Activated CD4-positive, alpha-beta memory T cell treated with anti-CD3 and anti-CD28 coated beads for 36 hours (primary cell): ENCODE measurements at regions of chr16 and their contacts with region 1.

Region 1: GRCh38 chr16:57300387-57301125 is 16.1 kb upstream of the PLLP start:
- DNase-seq: peak; percentile 100
- H3K4me3 Mint-ChIP-seq: no peak overlapping the region
- H3K27ac Mint-ChIP-seq: no peak overlapping the region
- H3K4me1 Mint-ChIP-seq: peaks cover 10% of the 10 kb centered on the region
- H3K27me3 Mint-ChIP-seq: no peaks in the 10 kb centered on the region

Region 2: GRCh38 chr16:57244767-57245471 is 55.6 kb before region 1 on chr16 and contains the start of gene ARL2BP:
- CTCF ChIA-PET with region 1: interaction called, 4 read pairs
- POLR2A ChIA-PET with region 1: no interaction called
- intact Hi-C with region 1: loop called (anchors 1 kb)
- DNase-seq: peak; percentile 99
- H3K4me3 Mint-ChIP-seq: peak within 1 kb of the TSS; percentile 89
- H3K27ac Mint-ChIP-seq: peak within 1 kb of the TSS; percentile 88
- H3K4me1 Mint-ChIP-seq: peaks cover 16% of the 10 kb centered on the region
- H3K27me3 Mint-ChIP-seq: no peaks in the 10 kb centered on the region
- total RNA-seq, gene ARL2BP: 16.4 to 16.9 TPM

Region 3: GRCh38 chr16:57260294-57260929 is 40.1 kb before region 1 on chr16:
- CTCF ChIA-PET with region 1: no interaction called
- POLR2A ChIA-PET with region 1: no interaction called
- intact Hi-C with region 1: no loop called
- DNase-seq: peak; percentile 29
- H3K4me3 Mint-ChIP-seq: no peak overlapping the region
- H3K27ac Mint-ChIP-seq: no peak overlapping the region
- H3K4me1 Mint-ChIP-seq: peaks cover 13% of the 10 kb centered on the region
- H3K27me3 Mint-ChIP-seq: no peaks in the 10 kb centered on the region

Region 4: DNA sequence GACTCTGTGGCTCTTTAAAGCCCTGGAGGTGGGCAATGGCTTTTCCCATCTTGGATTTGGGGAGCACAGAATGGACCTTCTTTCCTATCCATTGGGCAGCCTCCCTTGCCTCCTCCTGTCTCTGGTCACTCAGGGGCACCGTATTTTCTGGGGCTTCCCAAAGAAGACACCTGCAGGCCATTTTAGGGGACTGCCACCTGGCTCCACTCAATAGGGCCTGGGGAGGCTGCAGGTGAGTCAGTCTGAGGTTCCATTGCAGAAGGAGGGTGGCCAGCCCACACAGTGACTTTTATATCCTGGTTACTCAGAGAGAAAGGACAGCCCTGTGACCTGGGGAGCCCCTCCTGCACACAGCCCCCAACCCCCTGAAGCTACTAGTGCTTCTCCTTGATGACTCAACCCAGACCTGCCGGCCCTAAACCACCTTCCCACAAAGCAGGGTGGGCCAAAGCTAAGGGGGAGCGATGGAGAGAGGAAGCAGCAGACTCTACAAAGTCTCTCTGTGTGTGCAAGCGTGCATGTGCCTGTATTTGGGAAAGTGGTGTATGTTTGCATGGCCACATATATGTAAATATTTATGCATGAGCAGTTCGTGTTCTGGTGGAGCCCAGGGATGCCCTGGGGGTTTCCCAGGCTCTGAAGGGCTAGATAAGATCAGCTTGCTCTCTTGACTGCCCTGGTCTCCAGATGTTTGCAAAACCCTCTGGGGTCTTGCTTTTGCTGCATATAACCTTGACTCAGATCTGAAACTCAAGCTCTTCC is 76.7 kb after region 1 on chr16:
- CTCF ChIA-PET with region 1: no interaction called
- POLR2A ChIA-PET with region 1: no interaction called
- intact Hi-C with region 1: loop called (anchors 1 kb)
- DNase-seq: peak; percentile 70
- H3K4me3 Mint-ChIP-seq: no peak overlapping the region
- H3K27ac Mint-ChIP-seq: peak overlapping the region; percentile 51
- H3K4me1 Mint-ChIP-seq: peaks cover 14% of the 10 kb centered on the region
- H3K27me3 Mint-ChIP-seq: peaks cover 3% of the 10 kb centered on the region

Region 5: GRCh38 chr16:57447186-57447962 is 146.8 kb after region 1 on chr16 and contains the starts of genes CIAPIN1 and COQ9:
- CTCF ChIA-PET with region 1: interaction called, 13 read pairs
- POLR2A ChIA-PET with region 1: interaction called, 6 read pairs
- intact Hi-C with region 1: loop called (anchors 1 kb)
- DNase-seq: peak; percentile 96
- H3K4me3 Mint-ChIP-seq: peak within 1 kb of the TSS; percentile 91
- H3K27ac Mint-ChIP-seq: peak within 1 kb of the TSS; percentile 70
- H3K4me1 Mint-ChIP-seq: peaks cover 28% of the 10 kb centered on the region
- H3K27me3 Mint-ChIP-seq: no peaks in the 10 kb centered on the region
- total RNA-seq, gene CIAPIN1: 34.8 to 38.5 TPM
- total RNA-seq, gene COQ9: 29.8 to 33.0 TPM

Region 6: GRCh38 chr16:57519796-57520360 is 219.3 kb after region 1 on chr16:
- CTCF ChIA-PET with region 1: interaction called, 41 read pairs
- POLR2A ChIA-PET with region 1: no interaction called
- intact Hi-C with region 1: loop called (anchors 1 kb)
- DNase-seq: peak; percentile 85
- H3K4me3 Mint-ChIP-seq: no peak overlapping the region
- H3K27ac Mint-ChIP-seq: no peak overlapping the region
- H3K4me1 Mint-ChIP-seq: peaks cover 3% of the 10 kb centered on the region
- H3K27me3 Mint-ChIP-seq: no peaks in the 10 kb centered on the region

Region 7: GRCh38 chr16:57826706-57827625 is 526.4 kb after region 1 on chr16:
- CTCF ChIA-PET with region 1: no interaction called
- POLR2A ChIA-PET with region 1: no interaction called
- intact Hi-C with region 1: no loop called
- DNase-seq: no peak
- H3K4me3 Mint-ChIP-seq: no peak overlapping the region
- H3K27ac Mint-ChIP-seq: no peak overlapping the region
- H3K4me1 Mint-ChIP-seq: no peaks in the 10 kb centered on the region
- H3K27me3 Mint-ChIP-seq: peaks cover 8% of the 10 kb centered on the region